A673 (cell line): ENCODE measurements at regions of chr11 and their contacts with region 1.

Region 1: GRCh38 chr11:42631220-42631843 is 680.5 kb upstream of the API5 start:
- DNase-seq: peak; percentile 84
- H3K4me3 ChIP-seq: no peak overlapping the region
- H3K27ac ChIP-seq: no peak overlapping the region
- H3K4me1 ChIP-seq: no peaks in the 10 kb centered on the region
- H3K27me3 ChIP-seq: no peaks in the 10 kb centered on the region
- CTCF ChIP-seq: peak; percentile 86

Region 2: DNA sequence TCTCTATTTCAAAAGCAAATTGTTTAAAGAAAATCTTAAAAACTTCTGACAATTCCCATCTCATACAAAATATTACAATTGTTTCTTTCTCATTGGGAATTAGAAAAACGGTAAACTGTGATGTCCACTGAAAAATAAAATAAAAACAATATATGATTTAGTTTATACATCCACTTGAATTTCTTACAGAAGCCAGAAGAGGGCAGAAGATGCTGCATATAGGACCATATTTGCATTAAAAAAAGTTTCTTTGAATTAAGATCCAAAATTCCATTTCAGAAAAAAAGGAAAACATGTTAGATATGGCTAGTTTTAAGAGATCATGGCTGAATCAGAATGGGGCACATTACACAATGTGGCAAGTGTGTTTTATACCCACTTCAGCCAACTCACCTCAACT is 1132.6 kb before region 1 on chr11:
- CTCF ChIA-PET with region 1: no interaction called
- POLR2A ChIA-PET with region 1: no interaction called
- intact Hi-C with region 1: loop called (anchors 10 kb)
- DNase-seq: peak; percentile 47
- H3K4me3 ChIP-seq: no peak overlapping the region
- H3K27ac ChIP-seq: no peak overlapping the region
- H3K4me1 ChIP-seq: peaks cover 31% of the 10 kb centered on the region
- H3K27me3 ChIP-seq: no peaks in the 10 kb centered on the region
- CTCF ChIP-seq: peak; percentile 78

Region 3: GRCh38 chr11:43145653-43146052 is 514.3 kb after region 1 on chr11:
- CTCF ChIA-PET with region 1: no interaction called
- POLR2A ChIA-PET with region 1: no interaction called
- intact Hi-C with region 1: loop called (anchors 10 kb)
- DNase-seq: no peak
- H3K4me3 ChIP-seq: no peak overlapping the region
- H3K27ac ChIP-seq: no peak overlapping the region
- H3K4me1 ChIP-seq: no peaks in the 10 kb centered on the region
- H3K27me3 ChIP-seq: no peaks in the 10 kb centered on the region
- CTCF ChIP-seq: no peak